Right ventricle myocardium superior (tissue), 1 donor: ENCODE measurements at regions of chr10 and their contacts with region 1.

Region 1: GRCh38 chr10:97612386-97612785 is 20.9 kb downstream of the MORN4 start:
- DNase-seq: no peak
- ATAC-seq: peak; percentile 66

Region 2: DNA sequence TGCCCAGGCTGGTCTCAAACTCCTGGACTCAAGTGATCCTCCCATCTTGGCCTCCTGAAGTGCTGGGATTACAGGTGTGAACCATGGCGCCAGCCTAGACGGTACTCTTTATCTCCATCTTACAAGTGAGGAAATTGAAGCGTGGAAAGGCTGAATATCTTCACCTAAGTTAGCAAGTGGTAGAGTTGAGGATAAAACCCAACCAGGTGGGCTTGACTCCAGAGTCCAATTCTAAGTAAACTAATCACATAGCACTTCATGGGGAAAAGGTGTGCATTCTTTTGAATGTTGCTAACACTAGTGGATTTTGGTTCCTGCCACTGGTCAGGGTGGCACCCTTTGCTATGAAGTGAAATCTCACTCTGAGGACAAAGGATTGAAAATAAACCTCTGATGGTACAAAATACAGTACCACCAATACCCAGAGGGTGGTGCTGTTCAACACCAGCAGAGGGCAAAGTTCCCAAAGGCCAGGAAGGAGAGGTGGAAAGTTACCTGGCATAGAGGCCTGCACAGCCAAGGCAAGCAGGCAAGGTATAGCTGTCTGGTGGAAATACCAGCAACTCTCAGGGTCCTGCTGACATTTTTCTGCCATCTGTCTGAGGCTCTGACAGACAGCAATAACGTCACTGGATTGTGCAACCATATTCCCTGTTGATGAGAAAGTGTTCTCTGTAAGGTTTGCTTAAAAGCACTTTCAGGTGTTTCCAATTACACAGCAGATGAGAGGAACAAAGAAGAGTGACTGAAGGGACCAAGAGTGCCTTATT is 148.8 kb before region 1 on chr10:
- intact Hi-C with region 1: loop called (anchors 10 kb)
- DNase-seq: no peak
- ATAC-seq: peak; percentile 70

Region 3: DNA sequence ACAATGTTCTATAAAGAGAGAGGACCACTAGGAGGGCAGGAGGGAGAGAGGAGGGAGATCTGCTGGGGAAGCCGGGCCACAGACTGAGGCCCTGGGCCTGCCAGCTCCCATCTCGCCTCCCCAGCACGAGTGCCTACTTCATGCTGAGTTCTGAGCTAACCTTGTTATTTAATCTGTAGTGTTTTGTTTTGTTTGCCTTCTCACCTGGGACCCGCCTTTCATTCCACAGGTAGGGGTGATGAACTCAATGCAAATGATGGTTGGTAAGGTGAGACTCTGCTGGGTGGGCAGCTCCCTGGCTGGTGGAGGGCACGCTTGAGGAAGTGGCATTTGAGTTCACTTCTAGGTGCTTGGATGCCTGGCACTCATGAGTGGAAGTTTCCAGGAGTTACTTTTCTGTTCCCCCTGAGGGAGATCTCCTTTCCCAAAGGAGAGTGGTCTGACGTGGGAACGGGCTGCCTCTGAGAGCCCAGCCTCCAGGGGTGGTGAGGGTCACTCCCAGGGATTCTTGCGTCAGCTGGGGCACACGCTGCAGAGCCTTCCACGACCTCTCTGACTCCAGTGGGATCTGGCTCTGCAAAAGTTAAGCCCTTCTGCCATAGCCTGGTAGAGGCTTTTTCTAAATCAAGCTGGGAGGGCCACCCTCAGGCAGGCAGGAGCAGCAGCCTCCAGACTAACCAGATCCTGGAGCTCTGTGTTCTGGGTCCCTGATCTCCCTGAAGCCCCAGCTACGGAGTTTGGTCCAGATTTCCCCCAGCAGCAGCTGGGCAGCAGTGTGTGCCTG is 91.2 kb before region 1 on chr10:
- intact Hi-C with region 1: no loop called
- DNase-seq: no peak
- ATAC-seq: peak; percentile 29

Region 4: DNA sequence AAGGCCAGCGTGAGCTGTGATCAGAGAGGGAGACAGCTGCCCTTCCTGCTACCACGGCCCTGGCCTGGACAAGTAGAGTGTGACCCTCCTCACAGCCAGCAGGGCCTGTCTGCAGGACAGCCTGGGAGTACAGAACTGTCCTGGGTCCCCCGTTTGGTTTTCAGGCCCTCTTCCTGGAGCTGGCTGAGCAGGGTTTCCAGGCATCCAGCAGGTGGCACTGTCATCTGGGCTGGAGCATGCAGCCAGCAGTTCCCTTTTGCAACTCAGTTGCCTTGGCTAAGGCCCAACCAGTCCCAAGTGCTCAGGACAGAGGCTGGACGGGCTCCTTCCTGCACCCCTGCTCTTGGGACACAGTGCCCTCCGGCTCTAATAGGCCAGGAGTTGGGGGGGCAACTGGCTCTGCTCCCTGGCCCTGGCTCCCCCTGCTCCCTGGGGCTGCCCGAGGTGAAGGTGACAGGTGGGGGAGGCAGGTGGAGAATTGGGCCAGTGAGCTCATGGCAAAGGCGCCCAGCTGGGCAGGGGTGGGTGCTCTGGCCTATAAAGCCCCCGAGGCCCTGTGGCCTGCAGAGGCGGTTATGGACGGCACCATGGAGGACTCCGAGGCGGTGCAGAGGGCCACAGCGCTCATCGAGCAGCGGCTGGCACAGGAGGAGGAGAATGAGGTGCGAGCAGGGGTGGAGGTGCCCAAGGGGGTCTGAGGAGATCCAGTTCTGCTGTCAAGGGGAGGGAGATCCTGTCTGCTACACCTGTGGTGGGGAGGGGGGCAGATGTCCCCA is 40.0 kb before region 1 on chr10 and contains the start of gene ANKRD2:
- intact Hi-C with region 1: loop called (anchors 2 kb)
- DNase-seq: peak; percentile 88
- ATAC-seq: peak; percentile 85
- total RNA-seq, gene ANKRD2: 152 TPM

Region 5: DNA sequence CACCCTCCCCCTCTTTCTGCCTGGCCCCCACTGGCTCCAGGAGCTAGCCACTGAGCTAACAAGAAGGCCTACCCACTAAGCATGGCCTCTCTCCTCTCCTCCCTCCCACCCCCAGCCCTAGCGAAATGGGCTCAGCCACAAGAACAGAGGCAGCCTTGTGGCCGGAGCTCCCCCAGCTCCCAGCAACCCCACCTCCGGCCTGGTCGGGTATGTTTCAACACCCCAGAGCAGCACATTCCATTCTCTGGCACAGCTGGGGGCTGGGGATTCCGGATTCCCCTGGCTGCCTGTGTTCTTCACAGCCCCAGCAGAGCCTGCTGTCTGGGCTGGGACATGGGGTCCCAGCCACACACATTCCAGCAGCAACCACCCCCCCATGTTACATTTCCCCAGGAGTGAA is 150.4 kb after region 1 on chr10:
- intact Hi-C with region 1: no loop called
- DNase-seq: no peak
- ATAC-seq: peak; percentile 63